ENCODE measurements at regions of chr6 and their contacts with region 1.

Region 1: GRCh38 chr6:85642774-85643536 is at the start of gene SYNCRIP:
- DNase-seq: peak; percentile 92 to 97
- H3K4me3 ChIP-seq: peak within 1 kb of the TSS; percentile 91 to 97 (median 96)
- H3K27ac ChIP-seq: peak within 1 kb of the TSS; percentile 99
- H3K4me1 ChIP-seq: peaks cover 0 to 9% (median 5%) of the 10 kb centered on the region in 4 experiments; a peak in 4 of 7 replicates
- H3K27me3 ChIP-seq: no peaks in the 10 kb centered on the region
- CTCF ChIP-seq: no peak
- EP300 ChIP-seq: 0 out of 3 replicates have a peak, but pooled peaks of 1 of the 2 experiments have one; percentile 56
- POLR2A ChIP-seq: peak; percentile 87 to 91
- RAD21 ChIP-seq: no peak
- total RNA-seq, gene SYNCRIP: 206 and 219 TPM in 2 replicates

Region 2: DNA sequence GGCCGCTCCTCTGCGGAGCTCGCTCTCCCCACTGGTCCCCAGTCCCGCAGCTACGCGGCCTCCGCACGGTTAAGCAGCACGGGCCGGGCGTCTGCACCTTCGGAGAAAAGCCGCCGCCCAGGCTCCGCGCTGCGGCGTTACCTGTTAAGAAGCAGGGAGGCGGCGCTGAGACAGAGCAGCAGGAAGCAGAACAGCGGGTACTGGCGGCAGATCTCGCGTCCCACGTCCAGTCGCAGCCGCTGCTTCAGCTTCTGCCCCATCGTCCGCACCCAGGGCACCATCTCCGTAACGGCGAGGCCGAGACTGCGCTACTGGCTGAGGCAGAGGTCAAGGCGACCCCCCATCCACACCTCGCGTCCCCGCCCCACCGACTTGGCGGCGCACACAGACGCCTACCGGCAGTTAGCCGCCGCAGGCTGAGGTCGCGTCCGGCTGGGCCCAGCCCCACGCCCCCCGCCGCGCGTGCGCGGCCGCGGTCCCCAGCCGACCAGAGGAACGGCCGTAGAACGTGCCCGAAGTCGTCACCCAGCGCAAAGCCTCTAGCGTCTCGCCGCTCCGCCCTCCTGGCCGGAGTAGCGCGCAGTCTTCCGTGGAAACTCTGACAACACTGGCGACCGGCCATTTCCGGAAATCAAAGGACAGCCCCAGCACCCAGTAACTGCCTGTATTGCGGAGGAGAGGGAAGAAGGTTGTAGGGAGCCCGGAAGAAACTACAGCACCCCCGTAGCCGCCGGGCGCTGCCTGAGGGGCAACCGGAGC is 49.3 kb before region 1 on chr6 and contains the start of gene SNX14:
- CTCF ChIA-PET with region 1: interaction called, 3 read pairs
- POLR2A ChIA-PET with region 1: interaction called, 50 read pairs
- DNase-seq: peak; percentile 50 to 87
- H3K4me3 ChIP-seq: peak within 1 kb of the TSS; percentile 77 to 87 (median 81)
- H3K27ac ChIP-seq: peak within 1 kb of the TSS; percentile 20; the same call in 1 of the 2 replicates
- H3K4me1 ChIP-seq: no peaks in the 10 kb centered on the region
- H3K27me3 ChIP-seq: no peaks in the 10 kb centered on the region; a peak in 2 of 7 replicates
- CTCF ChIP-seq: no peak; a peak in 1 of 4 replicates
- EP300 ChIP-seq: 0 out of 3 replicates have a peak, but pooled peaks of 1 of the 2 experiments have one; percentile 7
- POLR2A ChIP-seq: peak in 1 of 2 experiments; percentile 62; a peak in 1 of 3 replicates
- RAD21 ChIP-seq: no peak; a peak in 1 of 4 replicates
- total RNA-seq, gene SNX14: 24.2 and 29.6 TPM in 2 replicates

Region 3: DNA sequence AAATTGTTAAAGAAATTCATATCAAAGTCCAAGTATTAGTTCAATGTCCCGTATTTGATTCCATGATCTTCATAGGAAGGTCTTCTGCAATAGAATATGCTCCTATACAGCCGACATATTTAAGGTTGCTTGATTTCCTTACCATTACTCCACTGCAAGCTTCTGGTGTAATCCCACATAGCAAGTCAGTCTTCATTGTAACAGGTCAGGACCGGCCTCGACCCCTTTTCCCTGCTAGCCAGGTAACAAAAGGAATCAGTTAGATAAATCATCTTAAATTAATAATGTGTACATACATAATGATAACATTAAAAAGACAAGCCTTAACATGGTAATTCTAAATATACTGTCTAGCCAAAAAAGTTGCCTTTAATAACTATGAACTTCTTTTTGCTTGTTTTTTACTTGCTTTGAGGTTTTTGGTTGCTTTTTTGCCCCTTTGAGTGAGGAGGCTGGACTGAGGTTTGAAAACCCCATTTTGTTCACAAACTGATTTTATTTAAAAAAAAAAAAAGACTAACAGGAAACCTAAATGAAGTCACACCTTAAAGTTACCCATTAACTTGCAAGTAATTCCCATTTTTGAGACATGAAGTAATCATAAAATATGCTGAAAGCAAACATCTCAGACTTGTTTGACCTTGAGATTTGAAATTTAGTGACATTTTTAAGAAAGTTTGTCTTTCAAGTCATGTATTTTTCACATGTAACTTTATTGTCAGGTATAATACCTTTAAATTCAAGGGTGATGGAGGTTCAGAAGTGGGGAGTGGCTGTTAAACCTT is 30.1 kb before region 1 on chr6:
- CTCF ChIA-PET with region 1: no interaction called
- POLR2A ChIA-PET with region 1: interaction called, 53 read pairs
- DNase-seq: no peak
- H3K4me3 ChIP-seq: no peak overlapping the region
- H3K27ac ChIP-seq: no peak overlapping the region
- H3K4me1 ChIP-seq: no peaks in the 10 kb centered on the region
- H3K27me3 ChIP-seq: no peaks in the 10 kb centered on the region
- CTCF ChIP-seq: no peak
- EP300 ChIP-seq: no peak
- POLR2A ChIP-seq: peak in 1 of 2 experiments; percentile 12; a peak in 1 of 3 replicates
- RAD21 ChIP-seq: no peak

Region 4: GRCh38 chr6:85628353-85628752 is 14.6 kb before region 1 on chr6:
- CTCF ChIA-PET with region 1: interaction called, 6 read pairs
- POLR2A ChIA-PET with region 1: interaction called, 268 read pairs
- DNase-seq: no peak
- H3K4me3 ChIP-seq: no peak overlapping the region
- H3K27ac ChIP-seq: no peak overlapping the region
- H3K4me1 ChIP-seq: no peaks in the 10 kb centered on the region
- H3K27me3 ChIP-seq: no peaks in the 10 kb centered on the region
- CTCF ChIP-seq: no peak
- EP300 ChIP-seq: no peak
- POLR2A ChIP-seq: no peak
- RAD21 ChIP-seq: no peak

Region 5: GRCh38 chr6:85660181-85660611 is 17.2 kb after region 1 on chr6:
- CTCF ChIA-PET with region 1: interaction called, 3 read pairs
- POLR2A ChIA-PET with region 1: interaction called, 37 read pairs
- DNase-seq: no peak
- H3K4me3 ChIP-seq: no peak overlapping the region
- H3K27ac ChIP-seq: no peak overlapping the region
- H3K4me1 ChIP-seq: 0 out of 7 replicates have a peak, but pooled peaks cover 0 to 4% (median 0%) of the 10 kb centered on the region in 4 experiments
- H3K27me3 ChIP-seq: no peaks in the 10 kb centered on the region
- CTCF ChIP-seq: no peak
- EP300 ChIP-seq: no peak
- POLR2A ChIP-seq: no peak
- RAD21 ChIP-seq: peak; percentile 29 to 30; a peak in 2 of 4 replicates

Region 6: DNA sequence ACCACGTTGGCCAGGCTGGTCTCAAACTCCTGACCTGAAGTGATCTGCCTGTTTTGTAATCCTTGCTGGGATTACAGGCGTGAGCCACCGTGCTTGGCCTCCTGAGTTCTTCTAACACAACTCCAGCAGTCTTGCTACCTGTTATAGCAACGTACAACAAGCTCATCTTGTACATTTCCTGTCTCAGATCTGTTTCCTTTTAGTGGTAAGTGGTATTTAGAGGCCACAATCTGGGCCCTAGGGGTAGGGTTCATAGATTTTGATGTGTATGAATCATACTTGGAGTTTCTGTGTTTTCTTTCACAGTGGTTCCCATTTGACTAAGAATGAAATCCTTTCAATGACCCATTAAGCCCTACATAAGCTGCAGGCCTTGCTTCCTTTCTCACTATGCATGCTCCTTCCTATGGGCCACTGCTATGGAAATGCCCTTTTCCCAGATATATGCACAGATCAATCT is 26.8 kb after region 1 on chr6:
- CTCF ChIA-PET with region 1: interaction called, 18 read pairs
- POLR2A ChIA-PET with region 1: interaction called, 890 read pairs
- DNase-seq: peak in 1 of 2 experiments; percentile 53
- H3K4me3 ChIP-seq: no peak overlapping the region; a peak in 1 of 8 replicates
- H3K27ac ChIP-seq: peak overlapping the region; percentile 24; the same call in 1 of the 2 replicates
- H3K4me1 ChIP-seq: peaks cover 0 to 6% (median 4%) of the 10 kb centered on the region in 4 experiments; a peak in 3 of 7 replicates
- H3K27me3 ChIP-seq: no peaks in the 10 kb centered on the region
- CTCF ChIP-seq: no peak
- EP300 ChIP-seq: 0 out of 3 replicates have a peak, but pooled peaks of 1 of the 2 experiments have one; percentile 41
- POLR2A ChIP-seq: no peak; a peak in 1 of 3 replicates
- RAD21 ChIP-seq: no peak

Region 7: DNA sequence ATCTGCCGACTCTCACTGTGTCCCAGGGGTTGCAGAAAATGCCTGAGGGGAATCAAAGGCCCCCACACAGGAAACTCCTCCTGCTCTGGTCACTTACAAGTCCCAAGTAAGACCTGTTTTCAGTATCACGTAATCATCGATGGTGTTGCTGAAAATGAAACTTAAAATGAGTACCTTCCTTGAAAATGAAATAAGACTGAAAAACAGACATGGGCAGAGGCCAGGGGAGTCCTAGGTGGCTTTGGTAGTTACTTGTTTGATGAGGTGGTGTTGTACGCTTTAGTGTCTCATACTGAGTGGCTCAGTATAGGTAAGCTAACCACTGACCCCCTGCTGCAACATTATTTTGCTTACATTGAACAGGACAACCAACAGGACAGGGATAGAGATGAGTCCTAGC is 42.8 kb after region 1 on chr6:
- CTCF ChIA-PET with region 1: no interaction called
- POLR2A ChIA-PET with region 1: interaction called, 10 read pairs
- DNase-seq: no peak
- H3K4me3 ChIP-seq: no peak overlapping the region
- H3K27ac ChIP-seq: no peak overlapping the region
- H3K4me1 ChIP-seq: no peaks in the 10 kb centered on the region
- H3K27me3 ChIP-seq: no peaks in the 10 kb centered on the region
- CTCF ChIP-seq: no peak
- EP300 ChIP-seq: no peak
- POLR2A ChIP-seq: no peak
- RAD21 ChIP-seq: no peak

Region 8: DNA sequence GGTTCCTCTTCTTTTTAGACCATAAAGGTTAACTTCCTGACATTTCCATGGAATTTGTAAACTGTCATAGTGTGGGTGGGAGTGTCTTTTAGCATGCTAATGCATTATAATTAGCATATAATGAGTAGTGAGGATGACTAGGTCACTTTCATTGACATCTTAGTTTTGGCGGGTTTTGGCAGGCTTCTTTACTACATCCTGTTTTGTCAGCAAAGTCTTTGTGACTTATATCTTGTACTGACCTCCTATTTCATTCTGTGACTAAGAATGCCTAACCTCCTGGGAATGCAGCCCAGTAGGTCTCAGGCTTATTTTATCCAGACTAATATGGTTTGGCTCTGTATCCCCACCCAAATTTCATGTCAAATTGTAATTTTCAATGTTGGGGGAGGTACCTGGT is 149.3 kb after region 1 on chr6:
- CTCF ChIA-PET with region 1: no interaction called
- POLR2A ChIA-PET with region 1: no interaction called
- DNase-seq: no peak
- H3K4me3 ChIP-seq: no peak overlapping the region
- H3K27ac ChIP-seq: no peak overlapping the region
- H3K4me1 ChIP-seq: no peaks in the 10 kb centered on the region
- H3K27me3 ChIP-seq: no peaks in the 10 kb centered on the region
- CTCF ChIP-seq: no peak
- EP300 ChIP-seq: no peak
- POLR2A ChIP-seq: no peak
- RAD21 ChIP-seq: no peak

Region 9: GRCh38 chr6:85892346-85892745 is 249.4 kb after region 1 on chr6:
- CTCF ChIA-PET with region 1: no interaction called
- POLR2A ChIA-PET with region 1: no interaction called
- DNase-seq: no peak
- H3K4me3 ChIP-seq: no peak overlapping the region
- H3K27ac ChIP-seq: no peak overlapping the region
- H3K4me1 ChIP-seq: peaks cover 0 to 3% (median 1%) of the 10 kb centered on the region in 4 experiments; a peak in 1 of 7 replicates
- H3K27me3 ChIP-seq: no peaks in the 10 kb centered on the region
- CTCF ChIP-seq: no peak
- EP300 ChIP-seq: no peak
- POLR2A ChIP-seq: no peak
- RAD21 ChIP-seq: no peak

Region 10: GRCh38 chr6:86203044-86203443 is 560.1 kb after region 1 on chr6:
- CTCF ChIA-PET with region 1: no interaction called
- POLR2A ChIA-PET with region 1: no interaction called
- DNase-seq: no peak
- H3K4me3 ChIP-seq: no peak overlapping the region
- H3K27ac ChIP-seq: no peak overlapping the region; the same call in 1 of the 2 replicates
- H3K4me1 ChIP-seq: peaks cover 0 to 4% (median 1%) of the 10 kb centered on the region in 4 experiments; a peak in 1 of 7 replicates
- H3K27me3 ChIP-seq: no peaks in the 10 kb centered on the region
- CTCF ChIP-seq: no peak
- EP300 ChIP-seq: no peak
- POLR2A ChIP-seq: no peak
- RAD21 ChIP-seq: no peak

Measured in H1 (cell line).